Cardiac septum (tissue), 1 donor: ENCODE measurements at regions of chr7 and their contacts with region 1.

Region 1: GRCh38 chr7:122528879-122529481 is 169.9 kb downstream of the RNF133 start:
- DNase-seq: no peak

Region 2: DNA sequence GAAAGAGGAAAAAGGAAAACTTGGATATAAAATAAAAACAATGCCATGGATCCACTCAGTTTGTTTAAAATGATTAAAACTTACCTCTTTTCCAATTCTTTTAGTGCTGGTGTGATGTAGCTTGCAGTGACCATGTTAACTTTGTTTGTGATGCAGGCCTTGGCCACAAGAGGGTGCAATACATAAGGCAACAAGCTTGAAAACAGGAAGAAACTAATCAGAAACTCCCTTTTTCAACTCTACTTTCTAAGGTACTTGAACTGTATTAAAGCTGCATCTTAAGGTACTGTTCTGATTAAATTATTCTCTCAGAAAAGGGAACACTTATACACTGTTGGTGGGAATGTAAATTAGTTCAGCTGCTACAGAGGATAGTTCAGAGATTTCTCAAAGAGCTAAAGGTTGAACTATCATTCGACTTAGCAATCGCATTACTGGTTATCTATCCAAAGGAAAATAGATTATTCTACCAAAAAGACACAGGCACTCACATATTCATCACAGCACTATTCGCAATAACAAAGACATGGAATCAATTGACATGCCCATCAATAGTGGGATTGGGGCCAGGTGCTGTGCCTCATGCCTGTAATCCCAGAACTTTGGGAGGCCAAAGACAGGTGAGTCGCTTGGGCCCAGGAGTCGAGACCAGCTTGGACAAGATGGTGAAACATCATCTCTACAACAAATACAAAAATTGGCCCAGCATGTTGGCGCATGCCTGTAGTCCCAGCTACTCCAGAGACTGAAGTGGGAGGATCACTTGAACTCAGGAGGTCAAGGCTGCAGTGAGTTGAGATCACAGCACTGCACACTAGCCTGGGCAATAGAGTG is 435.8 kb before region 1 on chr7:
- intact Hi-C with region 1: loop called (anchors 5 kb)
- DNase-seq: no peak

Region 3: DNA sequence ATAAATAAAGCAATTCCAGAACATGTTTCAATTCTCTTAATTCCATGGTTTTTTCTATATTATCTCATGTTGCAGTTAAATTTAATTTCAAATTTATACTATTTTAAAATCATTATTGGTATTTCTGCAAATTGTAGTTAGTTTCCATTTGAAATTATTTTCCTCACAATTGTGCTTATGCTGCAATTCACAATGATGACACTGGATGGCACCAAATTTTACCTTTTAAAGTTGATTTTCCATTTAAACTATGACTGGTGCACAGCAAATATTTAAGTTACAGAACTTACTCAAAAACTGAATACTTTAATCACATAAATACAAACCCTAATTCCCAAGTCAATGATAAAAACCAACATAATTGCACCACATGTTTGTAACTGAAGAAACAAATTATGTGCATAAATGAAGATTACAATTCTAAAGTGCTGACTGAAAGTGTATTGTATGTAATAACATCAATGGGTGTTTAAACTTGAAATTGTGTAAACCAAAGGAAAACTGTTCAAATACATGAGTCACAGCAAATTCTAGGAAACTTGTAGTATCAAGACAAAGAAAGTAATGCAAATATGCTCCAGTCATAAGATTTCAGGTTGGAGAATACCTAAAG is 309.6 kb before region 1 on chr7:
- intact Hi-C with region 1: loop called (anchors 5 kb)
- DNase-seq: no peak

Region 4: DNA sequence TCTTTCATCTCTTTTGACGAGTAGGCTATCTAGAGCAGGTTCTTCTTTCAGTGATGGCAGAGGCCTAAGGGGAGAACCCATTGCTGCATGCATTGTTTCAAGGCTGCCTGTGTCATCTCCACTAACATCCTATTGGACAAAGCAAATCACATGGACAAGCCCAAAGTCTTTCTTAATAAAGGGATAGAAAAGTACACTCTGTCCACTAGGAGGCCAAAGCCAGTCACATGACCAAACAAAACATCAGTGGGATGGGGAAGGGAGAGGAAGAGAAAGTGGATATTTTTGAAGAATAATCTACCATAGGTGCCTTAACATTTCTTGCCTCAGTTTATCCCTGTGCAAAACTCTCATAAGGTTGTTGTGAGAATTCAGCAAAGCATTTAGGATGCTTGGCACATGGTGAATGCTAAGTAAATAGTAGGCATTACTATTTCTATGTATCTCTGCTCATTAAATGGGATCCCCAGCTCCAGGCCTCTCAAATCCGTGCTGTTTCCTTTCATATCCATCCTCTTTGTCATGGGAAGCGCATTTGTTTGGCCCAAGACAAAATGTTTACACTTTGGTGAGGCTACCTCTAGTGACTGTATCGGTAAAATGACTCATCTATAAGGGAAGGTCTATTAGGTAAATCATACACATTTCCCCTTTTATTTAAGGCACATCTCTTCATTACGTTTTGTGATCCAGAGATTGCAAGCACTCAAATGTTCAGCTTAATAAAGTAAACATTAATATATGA is 373.9 kb after region 1 on chr7:
- intact Hi-C with region 1: no loop called
- DNase-seq: no peak